Spleen (tissue), 13 donors: ENCODE measurements at regions of chr7 and their contacts with region 1.

Region 1: DNA sequence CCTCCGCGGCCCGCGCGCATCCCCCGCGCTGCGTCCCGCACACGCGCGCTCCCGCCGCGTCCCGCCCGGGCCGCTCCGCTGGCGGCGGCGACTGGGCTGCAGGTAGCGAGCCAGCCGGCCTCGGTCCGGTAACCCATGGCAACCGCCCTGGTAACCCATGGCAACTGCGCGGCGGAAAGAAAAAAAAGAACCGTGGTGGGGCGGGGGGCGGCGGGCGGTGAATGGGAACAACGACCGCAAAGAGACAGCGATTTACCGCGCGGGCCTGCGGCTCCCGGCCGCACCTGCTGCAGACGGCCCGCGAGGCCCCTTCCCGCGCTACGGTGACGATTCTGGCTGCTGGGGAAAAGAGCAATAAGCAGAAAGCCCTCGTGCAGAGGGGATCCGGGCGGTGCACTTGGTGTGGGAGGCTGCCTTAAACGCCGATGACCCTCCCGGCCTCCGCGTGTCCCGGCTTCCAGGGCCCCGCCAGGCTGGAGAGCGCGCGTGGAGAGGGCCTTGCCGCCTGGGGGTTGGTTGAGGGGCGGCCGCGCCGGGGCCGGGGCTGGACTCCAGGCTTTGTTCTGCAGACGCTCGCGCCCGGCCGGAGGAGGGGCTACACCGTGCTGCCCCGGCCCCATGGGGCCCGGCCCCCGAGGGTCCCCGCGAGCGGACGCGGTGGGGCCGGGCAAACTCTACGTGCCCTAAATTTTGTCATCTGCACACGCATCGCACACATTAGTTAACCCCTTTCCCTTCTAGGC is 84.7 kb downstream of the SNX10 start:
- DNase-seq: peak; percentile 84
- H3K4me3 ChIP-seq: peak overlapping the region; percentile 38 to 77 (median 60)
- H3K27ac ChIP-seq: peak overlapping the region in 7 of 8 donors; percentile 54 to 82 (median 69)
- H3K4me1 ChIP-seq: peaks cover 8 to 28% (median 19%) of the 10 kb centered on the region in 6 donors
- H3K27me3 ChIP-seq: peaks cover 0 to 50% (median 28%) of the 10 kb centered on the region in 7 donors
- CTCF ChIP-seq: no peak
- POLR2A ChIP-seq: no peak

Region 2: GRCh38 chr7:26667500-26668133 is 291.3 kb after region 1 on chr7:
- intact Hi-C with region 1: loop called (anchors 5 kb)
- DNase-seq: no peak
- H3K4me3 ChIP-seq: no peak overlapping the region
- H3K27ac ChIP-seq: peak overlapping the region in 1 of 8 donors; percentile 16
- H3K4me1 ChIP-seq: peaks cover 5 to 34% (median 10%) of the 10 kb centered on the region in 6 donors
- H3K27me3 ChIP-seq: no peaks in the 10 kb centered on the region
- CTCF ChIP-seq: peak; percentile 37 to 89 (median 68)
- POLR2A ChIP-seq: no peak

Region 3: DNA sequence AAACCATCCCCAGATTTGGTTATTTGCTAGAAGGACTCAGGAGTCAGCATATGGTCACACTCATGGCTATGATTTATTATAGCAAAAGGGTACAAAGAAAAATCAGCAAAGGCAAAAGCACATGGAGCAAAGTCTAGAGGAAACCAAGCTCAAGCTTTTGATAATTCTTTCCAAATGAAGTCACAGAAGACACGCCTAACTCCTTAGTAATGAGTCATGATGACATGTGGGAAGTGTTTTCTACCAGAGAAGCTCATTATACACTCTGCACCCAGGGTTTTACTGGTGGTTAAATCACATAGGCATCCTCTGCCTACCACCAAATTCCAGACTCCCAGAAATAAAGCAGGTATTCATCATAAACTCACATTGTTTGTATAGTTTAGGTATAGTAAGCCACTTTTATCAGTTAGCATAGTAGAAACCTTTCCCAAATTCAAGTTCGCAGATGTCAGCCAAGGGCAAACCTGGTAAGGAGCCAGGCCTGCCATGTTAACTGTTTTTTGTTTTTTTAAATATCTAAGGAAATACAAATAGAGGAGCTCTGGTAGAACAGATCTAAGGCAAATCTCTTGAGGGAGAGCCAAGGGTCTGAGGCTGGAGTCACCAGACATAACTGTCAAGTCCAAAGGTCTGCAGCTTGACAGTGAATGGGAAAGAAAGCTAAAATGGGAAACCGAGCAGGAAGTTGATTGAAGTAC is 1301.7 kb after region 1 on chr7:
- intact Hi-C with region 1: no loop called
- DNase-seq: no peak
- H3K4me3 ChIP-seq: no peak overlapping the region
- H3K27ac ChIP-seq: no peak overlapping the region
- H3K4me1 ChIP-seq: no peaks in the 10 kb centered on the region
- H3K27me3 ChIP-seq: no peaks in the 10 kb centered on the region
- CTCF ChIP-seq: no peak
- POLR2A ChIP-seq: no peak